HEK293 (cell line): ENCODE measurements at regions of chr10 and their contacts with region 1.

Region 1: DNA sequence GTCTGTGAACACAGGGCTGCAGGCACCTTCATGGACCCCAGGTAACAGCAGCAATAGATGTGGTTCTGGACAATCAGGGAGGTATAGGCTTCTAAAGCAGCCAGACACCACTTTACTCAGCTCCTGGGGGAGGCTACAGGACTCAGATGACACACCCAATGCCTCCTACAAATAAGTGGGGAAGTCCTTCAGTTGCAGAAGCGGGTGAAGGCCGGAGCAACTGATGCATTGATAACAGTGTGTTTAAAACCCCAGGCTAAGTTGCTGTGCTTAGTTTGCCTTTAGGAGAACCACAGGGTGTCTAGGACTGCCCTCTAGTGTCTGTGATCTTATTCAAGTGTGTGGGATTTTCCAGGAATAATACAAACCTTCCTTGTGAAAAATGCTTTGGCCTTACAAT is 5.9 kb upstream of the ITGA8 start:
- H3K4me3 ChIP-seq: no peak overlapping the region
- H3K27ac ChIP-seq: peak overlapping the region; percentile 51; the same call in 1 of the 2 replicates
- H3K4me1 ChIP-seq: peaks cover 10% of the 10 kb centered on the region
- CTCF ChIP-seq: no peak

Region 2: GRCh38 chr10:15427843-15428414 is 297.7 kb before region 1 on chr10:
- CTCF ChIA-PET with region 1: interaction called, 178 read pairs
- POLR2A ChIA-PET with region 1: no interaction called
- H3K4me3 ChIP-seq: no peak overlapping the region
- H3K27ac ChIP-seq: no peak overlapping the region
- H3K4me1 ChIP-seq: peaks cover 5% of the 10 kb centered on the region; the same call in 1 of the 2 replicates
- CTCF ChIP-seq: 0 out of 2 replicates have a peak, but pooled peaks have one; percentile 13

Region 3: GRCh38 chr10:15433850-15434537 is 291.6 kb before region 1 on chr10:
- CTCF ChIA-PET with region 1: interaction called, 178 read pairs
- POLR2A ChIA-PET with region 1: no interaction called
- H3K4me3 ChIP-seq: peak overlapping the region; percentile 22
- H3K27ac ChIP-seq: no peak overlapping the region; the same call in 1 of the 2 replicates
- H3K4me1 ChIP-seq: peaks cover 7% of the 10 kb centered on the region; the same call in 1 of the 2 replicates
- CTCF ChIP-seq: peak; percentile 75

Region 4: DNA sequence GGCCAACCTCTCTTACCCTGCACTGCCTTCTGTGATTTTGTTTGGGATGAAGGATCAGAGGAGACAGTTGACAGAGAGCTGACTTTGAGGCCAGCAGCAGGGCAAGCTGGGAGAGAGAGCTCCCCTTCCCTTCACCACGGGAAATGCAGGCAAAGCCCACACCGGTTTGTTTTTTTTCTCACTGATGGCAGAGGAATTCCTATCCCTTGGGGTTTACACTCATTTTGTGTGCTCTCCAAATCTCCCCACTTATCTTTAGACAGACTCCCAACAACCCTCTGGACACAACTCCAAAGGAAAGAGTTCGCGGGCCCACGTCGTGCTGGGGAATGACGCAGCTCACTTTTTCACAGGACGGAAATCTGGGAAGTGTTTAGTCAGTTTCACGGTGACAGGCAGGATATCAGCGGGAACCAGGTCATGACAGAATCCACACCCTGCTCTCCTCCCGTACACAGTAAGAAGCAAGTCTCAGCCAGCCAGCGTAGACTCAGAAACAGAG is 286.2 kb before region 1 on chr10:
- CTCF ChIA-PET with region 1: interaction called, 13 read pairs
- POLR2A ChIA-PET with region 1: no interaction called
- H3K4me3 ChIP-seq: no peak overlapping the region
- H3K27ac ChIP-seq: peak overlapping the region; percentile 50
- H3K4me1 ChIP-seq: peaks cover 6% of the 10 kb centered on the region
- CTCF ChIP-seq: peak; percentile 21; the same call in 1 of the 2 replicates